Breast epithelium (tissue), 4 donors: ENCODE measurements at regions of chr11 and their contacts with region 1.

Region 1: DNA sequence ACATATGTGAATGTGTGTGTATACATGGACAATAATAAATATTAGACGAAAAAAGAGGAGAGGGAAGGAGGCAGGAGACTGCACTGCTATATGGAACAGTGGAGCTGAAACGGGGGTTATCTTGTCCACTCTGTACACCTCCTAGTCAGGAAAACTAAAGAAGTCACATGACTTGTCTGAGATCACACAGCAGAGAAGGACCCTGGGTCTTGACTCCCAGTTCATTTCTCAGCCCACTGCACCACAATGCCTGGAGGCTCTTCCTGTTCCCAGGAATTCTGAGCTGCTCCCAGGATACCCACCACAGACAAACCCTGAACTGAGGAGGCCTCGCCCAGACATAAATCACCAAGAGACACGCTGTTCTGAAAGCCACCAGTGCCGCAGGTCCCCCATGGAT is 349.6 kb downstream of the CTTN start:
- DNase-seq: no peak
- H3K4me3 ChIP-seq: no peak overlapping the region
- H3K27ac ChIP-seq: no peak overlapping the region
- H3K4me1 ChIP-seq: no peaks in the 10 kb centered on the region
- H3K27me3 ChIP-seq: peaks cover 0 to 4% of the 10 kb centered on the region in 2 donors
- CTCF ChIP-seq: no peak
- POLR2A ChIP-seq: no peak

Region 2: GRCh38 chr11:70776914-70777532 is 29.1 kb after region 1 on chr11:
- intact Hi-C with region 1: loop called (anchors 1 kb)
- DNase-seq: no peak
- H3K4me3 ChIP-seq: no peak overlapping the region
- H3K27ac ChIP-seq: no peak overlapping the region
- H3K4me1 ChIP-seq: no peaks in the 10 kb centered on the region
- H3K27me3 ChIP-seq: no peaks in the 10 kb centered on the region
- CTCF ChIP-seq: no peak
- POLR2A ChIP-seq: no peak